ENCODE measurements at regions of chr17 and their contacts with region 1.

Region 1: GRCh38 chr17:18038861-18039534 is at the starts of genes ATPAF2 and GID4:
- DNase-seq: peak; percentile 100
- H3K4me3 ChIP-seq: peak within 1 kb of the TSS; percentile 65 to 88 (median 69)
- H3K27ac ChIP-seq: peak within 1 kb of the TSS; percentile 26 to 87 (median 71)
- H3K4me1 ChIP-seq: peaks cover 26 to 32% of the 10 kb centered on the region in 2 donors
- H3K27me3 ChIP-seq: no peaks in the 10 kb centered on the region
- CTCF ChIP-seq: no peak
- POLR2A ChIP-seq: peak in 1 of 2 donors; percentile 49
- total RNA-seq, gene ATPAF2: 28.1 to 40.1 (median 36.7) TPM
- total RNA-seq, gene GID4: 12.6 to 16.8 (median 13.5) TPM

Region 2: GRCh38 chr17:17859909-17860765 is 178.9 kb before region 1 on chr17:
- intact Hi-C with region 1: loop called (anchors 10 kb)
- DNase-seq: peak; percentile 76 to 84
- H3K4me3 ChIP-seq: no peak overlapping the region
- H3K27ac ChIP-seq: peak overlapping the region in 2 of 3 donors; percentile 46 to 49
- H3K4me1 ChIP-seq: peaks cover 32 to 44% of the 10 kb centered on the region in 2 donors
- H3K27me3 ChIP-seq: no peaks in the 10 kb centered on the region
- CTCF ChIP-seq: peak; percentile 92 to 99 (median 96)
- POLR2A ChIP-seq: no peak

Region 3: DNA sequence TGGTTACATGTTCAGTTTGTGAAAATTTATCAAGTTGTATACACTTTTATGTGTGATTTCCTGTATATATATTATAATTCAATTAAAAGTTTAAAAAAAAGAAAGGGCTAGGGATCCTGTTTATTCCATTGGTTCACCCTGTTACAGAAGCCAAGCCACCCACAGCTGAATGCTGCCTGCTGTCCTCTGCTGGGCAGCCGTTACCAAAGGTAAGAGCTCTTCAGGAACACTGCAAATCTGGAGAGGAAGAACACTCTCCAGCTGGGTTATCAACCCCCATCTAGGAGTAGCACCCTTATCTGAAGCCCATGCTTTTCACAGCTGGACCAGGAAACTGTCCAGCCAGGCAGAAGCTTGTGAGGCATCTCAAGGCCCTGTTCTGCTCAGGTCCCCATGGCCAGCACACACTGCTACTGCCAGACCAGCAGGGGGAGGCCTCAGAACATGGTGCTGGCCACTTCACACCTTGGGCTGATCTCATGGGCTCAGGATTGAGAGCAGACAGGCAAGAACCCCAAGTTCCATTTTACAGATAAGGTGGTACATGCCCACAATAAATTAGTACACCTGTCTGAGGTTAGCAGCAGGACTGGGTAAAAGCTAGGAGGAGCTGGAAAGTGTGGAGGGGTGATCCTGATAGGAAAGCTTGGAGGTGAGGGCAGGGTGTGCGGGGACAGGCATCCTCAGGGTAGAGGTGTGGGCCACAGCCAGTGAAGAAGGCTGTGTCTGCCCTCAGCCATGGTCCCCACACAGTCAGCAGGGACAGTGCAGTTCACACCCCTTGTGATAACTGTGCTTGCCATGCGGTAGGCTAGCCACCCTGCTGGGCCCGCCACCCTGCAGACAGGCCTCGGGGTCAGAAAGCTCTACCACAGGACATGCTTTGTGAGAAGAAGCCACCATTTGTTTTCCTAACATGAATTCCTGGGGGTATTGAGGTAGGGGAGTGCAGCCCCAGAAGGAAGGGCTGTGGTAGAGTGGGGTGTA is 147.9 kb before region 1 on chr17:
- intact Hi-C with region 1: loop called (anchors 10 kb)
- DNase-seq: peak; percentile 87 to 89
- H3K4me3 ChIP-seq: no peak overlapping the region
- H3K27ac ChIP-seq: peak overlapping the region in 1 of 3 donors; percentile 50
- H3K4me1 ChIP-seq: peaks cover 31 to 33% of the 10 kb centered on the region in 2 donors
- H3K27me3 ChIP-seq: no peaks in the 10 kb centered on the region
- CTCF ChIP-seq: peak; percentile 47 to 90 (median 80)
- POLR2A ChIP-seq: no peak

Region 4: DNA sequence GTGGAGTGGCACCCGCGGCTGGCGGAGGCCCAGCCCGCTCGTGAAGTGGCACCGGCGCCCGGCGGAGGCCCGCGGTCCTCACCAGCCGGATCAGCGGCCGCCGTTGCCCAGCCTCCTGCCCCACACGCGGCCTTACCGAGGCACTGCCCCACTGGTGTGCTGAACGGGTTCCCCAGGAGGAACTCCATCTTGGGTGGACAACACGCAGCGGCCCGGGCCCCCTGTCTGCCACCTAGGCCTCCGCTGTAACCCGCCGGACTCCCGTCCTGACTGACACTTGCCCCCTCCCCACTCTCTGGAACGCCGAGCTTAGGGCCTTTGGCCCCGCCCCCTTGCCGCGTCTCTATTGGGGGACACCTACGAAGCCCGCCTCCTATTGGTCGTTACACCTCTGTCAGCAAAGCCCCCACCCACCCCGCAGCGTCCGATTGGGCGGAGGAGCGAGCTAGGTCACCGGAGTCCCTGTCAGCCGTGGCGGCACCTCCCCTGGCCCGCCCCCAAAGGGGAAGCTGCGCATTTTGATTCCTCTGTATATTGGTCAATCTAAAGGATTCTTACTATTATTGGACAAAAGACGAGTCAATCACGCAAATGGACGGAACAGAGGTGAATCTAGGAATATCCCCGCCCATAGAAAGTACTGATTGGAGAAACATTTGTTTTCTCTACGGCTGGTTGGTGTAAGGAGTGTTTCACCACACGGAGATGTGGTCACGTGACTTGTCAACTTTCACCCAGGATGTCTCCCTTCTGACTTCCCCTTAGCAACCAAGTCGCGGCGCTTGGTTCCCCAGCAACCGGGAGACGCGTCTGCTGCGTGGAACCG is 66.7 kb before region 1 on chr17 and contains the starts of genes DRC3 and TOM1L2:
- intact Hi-C with region 1: loop called (anchors 10 kb)
- DNase-seq: peak; percentile 100
- H3K4me3 ChIP-seq: peak within 1 kb of the TSS; percentile 38 to 85 (median 79)
- H3K27ac ChIP-seq: peak within 1 kb of the TSS; percentile 60 to 86 (median 75)
- H3K4me1 ChIP-seq: peaks cover 30 to 32% of the 10 kb centered on the region in 2 donors
- H3K27me3 ChIP-seq: no peaks in the 10 kb centered on the region
- CTCF ChIP-seq: peak in 3 of 6 experiments; percentile 6 to 29 (median 21)
- POLR2A ChIP-seq: peak; percentile 92 to 94
- total RNA-seq, gene DRC3: 18.5 to 28.7 (median 23.4) TPM
- total RNA-seq, gene TOM1L2: 138 to 881 (median 257) TPM

Region 5: GRCh38 chr17:18139498-18140286 is 100.7 kb after region 1 on chr17:
- intact Hi-C with region 1: no loop called
- DNase-seq: no peak
- H3K4me3 ChIP-seq: no peak overlapping the region
- H3K27ac ChIP-seq: no peak overlapping the region
- H3K4me1 ChIP-seq: no peaks in the 10 kb centered on the region
- H3K27me3 ChIP-seq: no peaks in the 10 kb centered on the region
- CTCF ChIP-seq: no peak
- POLR2A ChIP-seq: no peak

Measured in thyroid gland (tissue), 4 donors.